ENCODE measurements at regions of chr5 and their contacts with region 1.

Region 1: DNA sequence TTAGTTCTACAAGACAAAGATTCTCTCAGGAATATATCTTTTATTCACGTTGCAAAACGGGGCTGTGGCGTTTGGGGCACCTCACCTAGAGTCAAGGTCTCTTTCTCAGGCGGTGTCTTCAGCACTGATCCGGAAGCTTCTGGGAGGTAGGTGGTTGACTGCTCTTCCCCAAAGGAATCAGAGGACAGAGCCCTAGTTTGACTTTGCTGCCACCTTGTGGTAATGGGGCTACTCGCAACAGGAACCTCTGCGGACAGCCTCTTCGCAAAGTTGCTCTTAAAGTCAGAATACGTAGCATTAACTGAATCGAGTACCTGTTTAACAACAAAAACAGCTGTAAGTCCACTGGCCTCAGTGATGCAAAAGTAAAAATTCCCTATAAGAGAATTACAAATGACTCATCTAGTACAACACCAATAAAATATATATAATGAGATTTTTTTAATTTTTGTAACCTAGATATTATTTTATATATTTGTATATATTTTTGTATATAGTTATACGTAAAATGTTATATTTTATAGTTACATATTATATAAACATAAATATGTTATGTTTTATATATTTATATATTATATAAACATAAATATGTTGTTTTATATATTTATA is 13.3 kb upstream of the GPX8 start:
- DNase-seq: peak; percentile 67 to 92
- ATAC-seq: peak; percentile 86 to 99 (median 98)
- H3K4me3 ChIP-seq: no peak overlapping the region
- H3K4me3 Mint-ChIP-seq: peak overlapping the region; percentile 35
- H3K27ac ChIP-seq: no peak overlapping the region
- H3K27ac Mint-ChIP-seq: no peak overlapping the region
- H3K4me1 ChIP-seq: peaks cover 7% of the 10 kb centered on the region
- H3K4me1 Mint-ChIP-seq: peaks cover 14 to 15% of the 10 kb centered on the region in 2 donors
- H3K27me3 ChIP-seq: no peaks in the 10 kb centered on the region
- H3K27me3 Mint-ChIP-seq: peaks cover 0 to 4% of the 10 kb centered on the region in 2 donors
- CTCF ChIP-seq: peak; percentile 97

Region 2: DNA sequence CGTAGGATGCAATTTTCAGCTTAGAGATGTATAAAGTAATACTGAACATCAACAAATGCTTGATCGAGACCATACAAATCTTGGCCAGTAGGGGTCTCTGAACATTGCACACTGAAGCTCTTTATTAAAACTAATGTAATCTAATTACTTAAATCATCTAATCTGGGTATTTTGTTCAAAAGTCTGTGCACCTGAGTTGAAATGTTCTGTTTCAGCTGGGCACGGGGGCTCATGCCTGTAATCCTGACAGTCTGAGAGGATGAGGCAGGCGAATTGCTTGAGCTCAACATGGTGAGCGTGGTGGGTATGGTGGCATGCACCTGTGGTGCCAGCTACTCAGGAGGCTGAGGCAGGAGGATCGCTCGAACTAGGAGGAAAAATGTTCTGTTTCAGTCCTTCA is 202.3 kb before region 1 on chr5:
- intact Hi-C with region 1: loop called (anchors 1 kb)
- DNase-seq: peak in 1 of 2 donors; percentile 82
- ATAC-seq: peak in 2 of 3 donors; percentile 70 to 71
- H3K4me3 ChIP-seq: no peak overlapping the region
- H3K4me3 Mint-ChIP-seq: no peak overlapping the region
- H3K27ac ChIP-seq: no peak overlapping the region
- H3K27ac Mint-ChIP-seq: no peak overlapping the region
- H3K4me1 ChIP-seq: peaks cover 3% of the 10 kb centered on the region
- H3K4me1 Mint-ChIP-seq: peaks cover 5% of the 10 kb centered on the region in 2 donors
- H3K27me3 ChIP-seq: no peaks in the 10 kb centered on the region
- H3K27me3 Mint-ChIP-seq: no peaks in the 10 kb centered on the region
- CTCF ChIP-seq: peak; percentile 87

Region 3: GRCh38 chr5:55601204-55601618 is 454.6 kb after region 1 on chr5:
- intact Hi-C with region 1: no loop called
- DNase-seq: no peak
- ATAC-seq: no peak
- H3K4me3 ChIP-seq: no peak overlapping the region
- H3K4me3 Mint-ChIP-seq: no peak overlapping the region
- H3K27ac ChIP-seq: no peak overlapping the region
- H3K27ac Mint-ChIP-seq: no peak overlapping the region
- H3K4me1 ChIP-seq: peaks cover 8% of the 10 kb centered on the region
- H3K4me1 Mint-ChIP-seq: peaks cover 8 to 11% of the 10 kb centered on the region in 2 donors
- H3K27me3 ChIP-seq: no peaks in the 10 kb centered on the region
- H3K27me3 Mint-ChIP-seq: no peaks in the 10 kb centered on the region
- CTCF ChIP-seq: no peak

Measured in natural killer cell (primary cell).